K562 (cell line): ENCODE measurements at regions of chr4 and their contacts with region 1.

Region 1: DNA sequence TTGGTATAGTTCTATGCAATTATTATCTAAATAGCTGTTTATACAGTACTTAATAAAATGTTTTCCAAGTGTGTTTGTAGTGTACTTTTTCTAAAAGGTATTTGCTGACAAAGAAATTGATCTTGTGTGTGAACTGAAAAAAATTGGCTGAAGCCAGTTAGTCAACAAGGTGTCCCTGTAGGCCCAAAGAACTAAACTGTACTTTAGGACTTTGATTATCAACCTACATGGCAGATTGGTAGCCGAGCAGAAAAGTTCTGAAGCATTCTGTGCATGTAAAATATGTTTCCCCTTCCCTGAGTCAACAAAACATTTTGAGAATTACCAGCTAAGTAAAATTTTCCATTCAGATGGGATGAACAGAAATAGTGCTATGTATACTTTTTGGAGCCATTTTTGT is 21.0 kb downstream of the ADH5 start:
- DNase-seq: no peak
- ATAC-seq: no peak
- H3K4me3 ChIP-seq: no peak overlapping the region
- H3K27ac ChIP-seq: no peak overlapping the region
- H3K4me1 ChIP-seq: no peaks in the 10 kb centered on the region
- H3K27me3 ChIP-seq: no peaks in the 10 kb centered on the region
- CTCF ChIP-seq: no peak
- EP300 ChIP-seq: no peak
- POLR2A ChIP-seq: no peak
- RAD21 ChIP-seq: no peak

Region 2: DNA sequence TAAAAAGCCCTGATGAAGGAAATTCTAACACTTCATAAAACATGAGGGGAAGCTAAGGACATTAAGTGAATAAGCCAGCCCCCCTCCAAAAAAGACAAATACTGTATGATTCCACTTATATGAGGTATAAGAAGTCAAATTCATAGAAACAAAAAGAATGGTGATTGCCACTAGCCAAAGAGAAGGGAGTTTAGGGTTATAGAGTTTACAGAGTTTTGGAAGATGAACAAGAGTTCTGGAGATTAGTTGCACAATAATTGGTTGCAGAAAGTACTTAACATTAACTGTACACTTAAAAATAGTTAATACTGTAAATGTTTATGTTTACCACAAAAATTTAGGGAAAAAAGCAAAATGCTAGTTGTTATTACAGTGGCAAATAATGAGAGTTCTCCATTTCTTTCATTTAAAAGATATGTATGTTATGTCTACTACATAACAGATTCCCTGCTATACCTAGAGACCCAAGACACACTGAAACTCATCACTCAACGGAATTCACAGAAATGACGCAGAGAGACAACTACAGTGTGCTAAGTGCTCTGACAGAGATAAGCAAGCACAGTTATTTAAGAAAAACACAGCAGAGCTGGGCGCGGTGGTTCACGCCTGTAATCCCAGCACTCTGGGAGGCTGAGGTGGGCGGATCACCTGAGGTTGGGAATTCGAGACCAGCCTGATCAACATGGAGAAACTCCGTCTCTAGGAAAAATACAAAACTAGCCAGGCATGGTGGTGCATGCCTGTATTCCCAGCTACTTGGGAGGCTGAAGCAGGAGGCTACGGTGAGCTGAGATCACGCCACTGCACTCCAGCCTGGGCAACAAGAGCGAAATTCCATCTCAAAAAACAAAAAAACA is 175.9 kb before region 1 on chr4:
- CTCF ChIA-PET with region 1: no interaction called
- POLR2A ChIA-PET with region 1: no interaction called
- in situ Hi-C with region 1: no loop called
- intact Hi-C with region 1: no loop called
- DNase-seq: peak in 2 of 4 experiments; percentile 60 to 82
- ATAC-seq: peak; percentile 95
- H3K4me3 ChIP-seq: no peak overlapping the region
- H3K27ac ChIP-seq: peak overlapping the region; percentile 44; the same call in 1 of the 3 replicates
- H3K4me1 ChIP-seq: peaks cover 4 to 9% of the 10 kb centered on the region in 2 experiments; a peak in 2 of 5 replicates
- H3K27me3 ChIP-seq: no peaks in the 10 kb centered on the region
- CTCF ChIP-seq: no peak
- EP300 ChIP-seq: peak; percentile 18; the same call in 1 of the 2 replicates
- POLR2A ChIP-seq: no peak
- RAD21 ChIP-seq: no peak

Region 3: DNA sequence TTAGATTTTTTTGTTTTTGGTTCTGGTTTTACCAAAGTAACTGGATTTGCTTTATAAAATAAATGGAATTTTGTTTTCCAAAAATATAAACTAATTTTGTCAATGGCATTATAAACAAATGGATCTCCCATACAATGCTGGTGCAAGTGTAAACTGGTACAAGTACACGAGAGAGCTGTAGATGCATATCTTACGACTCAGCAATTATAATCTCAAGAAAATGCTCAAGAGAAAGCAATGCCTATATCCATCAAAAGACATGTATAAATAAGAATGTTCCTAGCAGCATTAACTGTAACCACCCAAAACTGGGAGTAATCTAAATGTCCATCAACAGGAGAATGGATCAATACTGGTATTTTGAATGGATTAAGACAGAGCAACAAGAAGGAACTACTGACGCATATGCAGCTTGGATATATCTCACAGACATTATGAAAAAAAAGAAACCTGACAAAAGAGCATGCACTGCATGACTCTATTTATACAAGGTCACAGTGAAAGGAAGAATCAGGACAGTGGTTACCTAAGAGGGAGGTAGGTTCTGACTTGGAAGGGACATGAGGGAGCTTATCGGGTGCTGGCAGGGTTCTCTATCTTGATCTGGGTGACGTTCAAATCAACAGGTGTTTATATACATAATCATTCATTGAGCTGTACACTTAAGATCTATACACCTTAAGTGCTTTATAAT is 11.5 kb after region 1 on chr4:
- CTCF ChIA-PET with region 1: no interaction called
- POLR2A ChIA-PET with region 1: interaction called, 15 read pairs
- in situ Hi-C with region 1: no loop called
- intact Hi-C with region 1: no loop called
- DNase-seq: no peak
- ATAC-seq: peak; percentile 18; the same call in 1 of the 3 replicates
- H3K4me3 ChIP-seq: no peak overlapping the region
- H3K27ac ChIP-seq: no peak overlapping the region
- H3K4me1 ChIP-seq: no peaks in the 10 kb centered on the region
- H3K27me3 ChIP-seq: no peaks in the 10 kb centered on the region
- CTCF ChIP-seq: no peak
- EP300 ChIP-seq: no peak
- POLR2A ChIP-seq: no peak
- RAD21 ChIP-seq: no peak

Region 4: GRCh38 chr4:100569196-100569595 is 1501.6 kb after region 1 on chr4:
- CTCF ChIA-PET with region 1: no interaction called
- POLR2A ChIA-PET with region 1: no interaction called
- in situ Hi-C with region 1: no loop called
- intact Hi-C with region 1: no loop called
- DNase-seq: no peak
- ATAC-seq: no peak
- H3K4me3 ChIP-seq: no peak overlapping the region
- H3K27ac ChIP-seq: no peak overlapping the region
- H3K4me1 ChIP-seq: no peaks in the 10 kb centered on the region
- H3K27me3 ChIP-seq: no peaks in the 10 kb centered on the region
- CTCF ChIP-seq: no peak
- EP300 ChIP-seq: no peak
- POLR2A ChIP-seq: no peak
- RAD21 ChIP-seq: no peak